Thyroid gland (tissue), 4 donors: ENCODE measurements at regions of chr9 and their contacts with region 1.

Region 1: GRCh38 chr9:137114610-137115391 is at the start of gene DPP7:
- DNase-seq: peak; percentile 69 to 75
- H3K4me3 ChIP-seq: peak within 1 kb of the TSS; percentile 51 to 87 (median 53)
- H3K27ac ChIP-seq: no peak within 1 kb of the TSS
- H3K4me1 ChIP-seq: peaks cover 5 to 10% of the 10 kb centered on the region in 2 donors
- H3K27me3 ChIP-seq: no peaks in the 10 kb centered on the region
- CTCF ChIP-seq: no peak
- POLR2A ChIP-seq: peak in 1 of 2 donors; percentile 48
- total RNA-seq, gene DPP7: 120 to 209 (median 157) TPM

Region 2: GRCh38 chr9:136614372-136614922 is 500.4 kb before region 1 on chr9:
- intact Hi-C with region 1: no loop called
- DNase-seq: no peak
- H3K4me3 ChIP-seq: no peak overlapping the region
- H3K27ac ChIP-seq: peak overlapping the region in 2 of 3 donors; percentile 13 to 49
- H3K4me1 ChIP-seq: peaks cover 0 to 16% of the 10 kb centered on the region in 2 donors
- H3K27me3 ChIP-seq: no peaks in the 10 kb centered on the region
- CTCF ChIP-seq: no peak
- POLR2A ChIP-seq: no peak

Region 3: GRCh38 chr9:137233143-137233980 is 118.6 kb after region 1 on chr9:
- intact Hi-C with region 1: loop called (anchors 5 kb)
- DNase-seq: no peak
- H3K4me3 ChIP-seq: no peak overlapping the region
- H3K27ac ChIP-seq: no peak overlapping the region
- H3K4me1 ChIP-seq: peaks cover 14 to 27% of the 10 kb centered on the region in 2 donors
- H3K27me3 ChIP-seq: no peaks in the 10 kb centered on the region
- CTCF ChIP-seq: no peak
- POLR2A ChIP-seq: no peak

Region 4: GRCh38 chr9:137254624-137255447 is 140.0 kb after region 1 on chr9 and contains the start of gene NELFB:
- intact Hi-C with region 1: no loop called
- DNase-seq: peak; percentile 95
- H3K4me3 ChIP-seq: peak within 1 kb of the TSS; percentile 68 to 78 (median 68)
- H3K27ac ChIP-seq: peak within 1 kb of the TSS; percentile 2 to 69 (median 43)
- H3K4me1 ChIP-seq: peaks cover 16 to 22% of the 10 kb centered on the region in 2 donors
- H3K27me3 ChIP-seq: no peaks in the 10 kb centered on the region
- CTCF ChIP-seq: peak in 1 of 6 experiments; percentile 19
- POLR2A ChIP-seq: peak in 1 of 2 donors; percentile 68
- total RNA-seq, gene NELFB: 29.8 to 39.1 (median 32.4) TPM